GM13977 (cell line): ENCODE measurements at regions of chr17 and their contacts with region 1.

Region 1: GRCh38 chr17:48084932-48085444 is 16.3 kb downstream of the CBX1 start:
- DNase-seq: no peak
- CTCF ChIP-seq: no peak

Region 2: DNA sequence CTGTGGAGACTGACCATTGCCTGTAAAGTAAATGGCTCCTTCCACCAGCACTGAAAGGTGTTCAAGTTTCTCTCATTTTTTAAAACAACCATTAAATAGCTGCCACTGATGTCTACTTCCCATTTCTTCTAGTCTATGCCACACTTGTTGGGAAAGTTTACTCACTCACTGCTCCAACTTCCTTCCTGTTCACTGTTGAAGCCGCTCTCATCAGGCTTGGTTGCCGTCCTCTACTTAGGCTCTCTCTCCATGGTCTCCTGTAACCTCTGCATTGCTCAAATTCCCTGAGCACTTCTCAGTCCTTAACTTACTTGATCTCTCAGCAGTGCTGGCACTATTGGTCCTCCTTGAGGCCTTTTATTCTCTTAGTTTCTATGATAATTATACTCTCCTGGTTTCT is 55.0 kb after region 1 on chr17:
- in situ Hi-C with region 1: loop called (anchors 5 kb)
- DNase-seq: no peak
- CTCF ChIP-seq: no peak